ENCODE measurements at regions of chr3 and their contacts with region 1.

Region 1: GRCh38 chr3:8111069-8111798 is 390.4 kb upstream of the LMCD1 start:
- DNase-seq: peak; percentile 65
- H3K4me3 Mint-ChIP-seq: no peak overlapping the region
- H3K27ac Mint-ChIP-seq: no peak overlapping the region
- H3K4me1 Mint-ChIP-seq: no peaks in the 10 kb centered on the region
- H3K27me3 Mint-ChIP-seq: no peaks in the 10 kb centered on the region

Region 2: DNA sequence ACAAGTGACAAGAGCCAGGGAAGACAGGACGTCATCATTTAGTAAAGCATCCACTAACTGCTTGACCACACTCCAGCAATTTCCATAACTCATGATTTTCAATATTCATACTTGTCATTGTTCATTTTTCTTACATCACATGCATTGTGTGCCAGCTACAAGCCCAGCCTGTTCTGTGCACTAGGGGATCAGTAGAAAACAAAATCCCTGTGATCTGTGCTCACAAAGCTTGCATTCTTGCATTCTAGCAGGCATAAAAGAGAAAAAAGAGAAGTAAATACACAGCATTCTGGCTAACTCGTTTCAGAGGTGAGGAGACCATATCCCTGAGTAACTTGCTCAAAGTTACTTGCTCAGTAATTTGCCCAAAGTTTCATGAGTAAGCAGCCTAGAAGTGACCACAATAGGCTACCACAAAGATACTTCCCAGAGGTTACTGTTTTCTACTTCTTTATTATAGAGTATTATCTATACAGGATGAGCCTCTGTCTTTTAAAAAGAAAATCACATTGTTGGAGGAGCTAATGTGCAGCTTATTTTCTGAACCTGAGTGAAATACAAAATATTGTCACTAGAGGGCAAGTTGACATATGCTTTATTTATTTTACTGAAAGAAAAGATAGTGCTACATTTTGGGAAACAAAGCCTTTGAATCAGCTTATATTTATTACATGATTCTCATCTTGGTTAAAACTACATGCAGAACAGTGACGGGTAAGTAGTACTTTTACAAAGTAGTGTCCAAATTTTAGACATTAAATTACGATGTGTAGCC is 311.0 kb before region 1 on chr3:
- CTCF ChIA-PET with region 1: interaction called, 8 read pairs
- POLR2A ChIA-PET with region 1: no interaction called
- intact Hi-C with region 1: loop called (anchors 5 kb)
- DNase-seq: no peak
- H3K4me3 Mint-ChIP-seq: no peak overlapping the region
- H3K27ac Mint-ChIP-seq: no peak overlapping the region
- H3K4me1 Mint-ChIP-seq: no peaks in the 10 kb centered on the region
- H3K27me3 Mint-ChIP-seq: no peaks in the 10 kb centered on the region

Region 3: GRCh38 chr3:8416965-8417364 is 305.7 kb after region 1 on chr3:
- CTCF ChIA-PET with region 1: interaction called, 6 read pairs
- POLR2A ChIA-PET with region 1: no interaction called
- intact Hi-C with region 1: loop called (anchors 5 kb)
- DNase-seq: no peak
- H3K4me3 Mint-ChIP-seq: no peak overlapping the region
- H3K27ac Mint-ChIP-seq: no peak overlapping the region
- H3K4me1 Mint-ChIP-seq: peaks cover 9% of the 10 kb centered on the region
- H3K27me3 Mint-ChIP-seq: no peaks in the 10 kb centered on the region